Activated T-helper 1 cell treated with anti-CD3 and anti-CD28 coated beads, Interleukin-12 subunit alpha, Interleukin-12 subunit beta, Interleukin-2, Interleukin-4 antibody, amounts not matched to agents 30 ng/mL and 10 ng/mL and 1 ng/mL, durations not matched to agents 14 hours and 24 hours and 36 hours (primary cell): ENCODE measurements at regions of chr10 and their contacts with region 1.

Region 1: GRCh38 chr10:110311357-110311949 is 6.7 kb upstream of the SMNDC1 start:
- DNase-seq: no peak
- H3K4me3 Mint-ChIP-seq: no peak overlapping the region
- H3K27ac Mint-ChIP-seq: no peak overlapping the region
- H3K4me1 Mint-ChIP-seq: peaks cover 51% of the 10 kb centered on the region
- H3K27me3 Mint-ChIP-seq: no peaks in the 10 kb centered on the region

Region 2: DNA sequence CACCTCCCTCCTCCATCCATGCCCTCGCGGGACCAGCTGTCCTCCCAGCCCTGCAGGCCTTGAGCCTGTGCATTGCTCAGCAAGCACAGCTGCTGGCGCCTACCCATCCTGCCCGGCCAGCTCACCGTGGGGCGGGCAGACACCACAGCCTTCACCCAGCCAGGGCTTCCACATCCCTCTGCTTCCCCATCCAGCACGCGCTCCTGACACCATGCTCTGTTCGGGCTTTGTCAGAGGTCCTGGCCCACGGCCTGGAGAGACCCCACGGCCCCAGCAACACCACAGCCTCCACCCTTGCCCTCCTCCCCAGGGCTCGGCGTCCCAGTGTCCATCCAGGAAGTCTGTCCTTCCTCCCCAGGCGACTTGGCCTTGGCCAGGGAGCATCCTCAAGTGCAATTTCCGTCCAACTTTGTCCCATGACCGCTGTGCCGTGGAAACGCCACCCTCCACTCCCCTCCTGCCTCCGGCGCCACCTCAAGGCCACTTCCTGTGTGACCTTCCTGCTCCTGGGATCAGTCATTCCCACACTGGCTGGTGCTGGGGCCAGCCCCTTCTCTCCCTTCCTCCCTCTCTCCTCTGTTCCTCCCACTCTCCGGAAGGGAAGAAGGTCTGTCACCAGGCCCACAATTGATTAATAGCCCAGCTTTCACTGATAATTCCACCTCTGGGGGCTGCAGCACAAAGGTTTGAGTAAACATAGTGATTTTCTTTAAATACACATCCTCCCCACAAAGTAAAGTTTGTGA is 64.7 kb after region 1 on chr10:
- intact Hi-C with region 1: no loop called
- DNase-seq: no peak
- H3K4me3 Mint-ChIP-seq: no peak overlapping the region
- H3K27ac Mint-ChIP-seq: no peak overlapping the region
- H3K4me1 Mint-ChIP-seq: peaks cover 42% of the 10 kb centered on the region
- H3K27me3 Mint-ChIP-seq: no peaks in the 10 kb centered on the region

Region 3: GRCh38 chr10:110600487-110601101 is 289.1 kb after region 1 on chr10:
- intact Hi-C with region 1: loop called (anchors 1 kb)
- DNase-seq: peak; percentile 24
- H3K4me3 Mint-ChIP-seq: no peak overlapping the region
- H3K27ac Mint-ChIP-seq: no peak overlapping the region
- H3K4me1 Mint-ChIP-seq: no peaks in the 10 kb centered on the region
- H3K27me3 Mint-ChIP-seq: no peaks in the 10 kb centered on the region